GM12878 (cell line): ENCODE measurements at regions of chr14 and their contacts with region 1.

Region 1: GRCh38 chr14:50714450-50715073 is 46.5 kb upstream of the SAV1 start:
- DNase-seq: no peak
- ATAC-seq: peak; percentile 85
- H3K4me3 ChIP-seq: no peak overlapping the region
- H3K27ac ChIP-seq: no peak overlapping the region
- H3K4me1 ChIP-seq: no peaks in the 10 kb centered on the region
- H3K27me3 ChIP-seq: no peaks in the 10 kb centered on the region
- CTCF ChIP-seq: peak; percentile 50 to 54 (median 52); a peak in 5 of 6 replicates
- EP300 ChIP-seq: no peak
- POLR2A ChIP-seq: no peak
- RAD21 ChIP-seq: peak; percentile 64

Region 2: DNA sequence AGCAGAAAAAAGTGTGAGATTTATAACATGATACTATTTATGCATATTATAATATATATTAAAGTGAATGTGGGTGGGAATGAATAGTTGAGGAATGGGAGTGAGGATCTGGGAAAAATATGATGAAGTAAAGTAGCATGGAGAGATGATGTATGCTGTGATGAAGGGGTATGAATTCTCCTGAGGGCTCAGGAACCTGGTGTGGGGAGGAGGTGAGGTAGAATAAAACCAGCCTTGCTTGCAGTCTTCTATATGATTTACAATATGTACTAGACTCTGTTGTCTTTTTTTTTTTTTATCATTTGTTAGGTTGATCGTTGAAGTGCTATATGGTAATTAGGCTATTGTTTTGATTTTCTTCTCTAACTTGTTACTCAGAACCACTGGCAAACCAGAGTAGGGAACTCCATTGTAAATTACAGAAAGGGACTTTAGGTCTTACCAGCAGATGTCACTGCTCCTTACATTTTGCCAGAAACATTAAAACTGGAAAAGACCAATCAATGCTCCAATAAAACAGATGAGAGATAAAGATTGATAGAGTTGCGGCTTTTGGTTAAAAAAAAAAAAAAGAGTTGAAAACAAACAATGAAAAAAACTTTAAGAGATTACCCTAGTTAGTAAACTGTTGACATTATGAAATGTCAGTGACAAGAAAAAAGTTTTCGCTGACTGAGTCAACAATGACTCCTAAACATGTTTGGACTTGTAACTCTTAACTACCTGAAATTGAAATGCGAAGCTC is 114.7 kb before region 1 on chr14:
- CTCF ChIA-PET with region 1: interaction called, 23 read pairs
- POLR2A ChIA-PET with region 1: interaction called, 3 read pairs
- RAD21 ChIA-PET with region 1: interaction called, 17 read pairs
- SMC1A ChIA-PET with region 1: interaction called, 34 read pairs
- in situ Hi-C with region 1: no loop called
- intact Hi-C with region 1: loop called (anchors 1 kb)
- DNase-seq: no peak
- ATAC-seq: peak; percentile 76
- H3K4me3 ChIP-seq: no peak overlapping the region
- H3K27ac ChIP-seq: no peak overlapping the region
- H3K4me1 ChIP-seq: no peaks in the 10 kb centered on the region
- H3K27me3 ChIP-seq: no peaks in the 10 kb centered on the region
- CTCF ChIP-seq: peak; percentile 49 to 67 (median 55); a peak in 5 of 6 replicates
- EP300 ChIP-seq: no peak
- POLR2A ChIP-seq: no peak
- RAD21 ChIP-seq: peak; percentile 79

Region 3: DNA sequence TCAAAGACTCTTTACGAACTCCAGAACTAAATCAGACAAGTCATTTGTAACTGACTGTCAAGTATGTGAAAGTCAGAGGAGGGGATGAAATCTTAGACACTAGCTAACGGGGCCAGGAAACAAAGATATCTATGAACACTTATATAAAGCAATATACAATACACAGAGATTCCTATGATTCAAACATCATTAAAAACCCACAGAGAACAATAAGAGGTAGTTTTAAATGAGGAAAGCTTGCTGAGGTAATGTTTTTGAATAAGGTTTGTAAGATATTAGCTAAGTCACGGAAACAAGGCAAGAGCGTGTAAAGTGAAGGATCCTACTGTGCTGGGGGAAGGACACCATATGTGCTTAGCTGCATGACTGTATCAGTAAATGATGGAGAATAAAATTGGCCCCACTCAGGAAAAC is 83.1 kb before region 1 on chr14:
- CTCF ChIA-PET with region 1: interaction called, 10 read pairs
- POLR2A ChIA-PET with region 1: no interaction called
- RAD21 ChIA-PET with region 1: interaction called, 19 read pairs
- SMC1A ChIA-PET with region 1: interaction called, 6 read pairs
- in situ Hi-C with region 1: no loop called
- intact Hi-C with region 1: no loop called
- DNase-seq: no peak
- ATAC-seq: no peak
- H3K4me3 ChIP-seq: no peak overlapping the region
- H3K27ac ChIP-seq: no peak overlapping the region
- H3K4me1 ChIP-seq: no peaks in the 10 kb centered on the region
- H3K27me3 ChIP-seq: no peaks in the 10 kb centered on the region
- CTCF ChIP-seq: no peak
- EP300 ChIP-seq: no peak
- POLR2A ChIP-seq: no peak
- RAD21 ChIP-seq: no peak

Region 4: DNA sequence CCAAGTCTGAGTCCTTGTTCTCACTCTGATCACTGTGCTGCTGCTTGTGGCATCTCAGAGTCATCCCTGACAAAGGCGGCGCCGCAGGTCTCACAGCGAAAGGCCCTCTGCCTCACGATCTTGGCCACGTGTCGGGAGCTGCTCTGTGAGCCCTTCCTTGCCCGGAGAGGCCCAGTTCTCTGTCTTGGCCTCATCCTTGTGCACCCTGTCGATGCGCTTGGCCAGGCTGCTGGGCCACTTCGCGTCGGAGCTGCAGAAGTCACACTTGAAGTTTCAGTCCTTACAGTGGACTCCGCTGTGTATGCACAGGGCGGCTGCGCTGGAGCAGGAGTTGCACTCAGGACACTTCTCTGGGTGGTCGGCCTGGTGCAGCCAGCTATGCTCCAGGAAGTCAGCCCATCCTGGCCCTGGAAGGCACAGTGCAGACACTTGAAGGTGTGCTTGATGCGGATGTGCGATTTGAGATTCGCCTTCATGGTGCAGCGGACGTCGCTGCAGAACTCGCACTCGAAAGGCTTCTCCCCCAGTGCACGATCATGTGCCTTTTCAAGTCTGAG is 10.0 kb before region 1 on chr14:
- CTCF ChIA-PET with region 1: interaction called, 10 read pairs
- POLR2A ChIA-PET with region 1: no interaction called
- RAD21 ChIA-PET with region 1: no interaction called
- SMC1A ChIA-PET with region 1: interaction called, 5 read pairs
- in situ Hi-C with region 1: no loop called
- intact Hi-C with region 1: no loop called
- DNase-seq: no peak
- ATAC-seq: no peak
- H3K4me3 ChIP-seq: no peak overlapping the region
- H3K27ac ChIP-seq: no peak overlapping the region
- H3K4me1 ChIP-seq: no peaks in the 10 kb centered on the region
- H3K27me3 ChIP-seq: no peaks in the 10 kb centered on the region
- CTCF ChIP-seq: no peak
- EP300 ChIP-seq: no peak
- POLR2A ChIP-seq: no peak
- RAD21 ChIP-seq: no peak

Region 5: DNA sequence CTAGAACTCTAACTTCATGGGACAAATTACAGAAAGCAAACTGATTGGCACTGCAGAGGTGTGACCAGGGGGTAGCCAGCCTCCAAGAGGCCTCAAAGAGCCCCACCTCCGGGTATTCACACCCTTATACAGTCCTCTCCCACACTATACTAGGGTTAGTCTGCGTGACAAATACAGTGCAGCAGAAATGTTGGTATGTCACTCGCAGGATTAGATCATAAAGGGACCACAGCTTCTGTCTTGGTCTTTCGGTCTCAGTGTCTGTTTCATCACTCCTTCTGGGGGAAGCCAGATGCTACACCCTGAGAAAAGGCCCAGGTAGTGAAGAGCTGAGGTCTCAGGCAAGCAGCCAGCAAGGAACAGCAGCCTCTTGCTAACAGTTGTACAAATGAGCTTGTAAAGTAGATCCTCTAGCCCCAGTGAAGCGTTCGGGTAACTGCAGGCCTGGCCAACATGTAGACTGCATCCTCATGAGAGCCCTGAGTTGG is 22.4 kb after region 1 on chr14:
- CTCF ChIA-PET with region 1: interaction called, 13 read pairs
- POLR2A ChIA-PET with region 1: no interaction called
- RAD21 ChIA-PET with region 1: interaction called, 4 read pairs
- SMC1A ChIA-PET with region 1: interaction called, 6 read pairs
- in situ Hi-C with region 1: no loop called
- intact Hi-C with region 1: no loop called
- DNase-seq: peak; percentile 79
- ATAC-seq: peak; percentile 89
- H3K4me3 ChIP-seq: no peak overlapping the region
- H3K27ac ChIP-seq: peak overlapping the region; percentile 62
- H3K4me1 ChIP-seq: peaks cover 35% of the 10 kb centered on the region
- H3K27me3 ChIP-seq: no peaks in the 10 kb centered on the region
- CTCF ChIP-seq: no peak
- EP300 ChIP-seq: peak; percentile 66 to 78; a peak in 3 of 4 replicates
- POLR2A ChIP-seq: peak; percentile 46
- RAD21 ChIP-seq: 0 out of 2 replicates have a peak, but pooled peaks have one; percentile 11

Region 6: GRCh38 chr14:50798048-50798421 is 83.5 kb after region 1 on chr14:
- CTCF ChIA-PET with region 1: no interaction called
- POLR2A ChIA-PET with region 1: no interaction called
- RAD21 ChIA-PET with region 1: no interaction called
- SMC1A ChIA-PET with region 1: no interaction called
- in situ Hi-C with region 1: no loop called
- intact Hi-C with region 1: no loop called
- DNase-seq: peak; percentile 42
- ATAC-seq: peak; percentile 98
- H3K4me3 ChIP-seq: no peak overlapping the region; the same call in 1 of the 2 replicates
- H3K27ac ChIP-seq: peak overlapping the region; percentile 36
- H3K4me1 ChIP-seq: peaks cover 55% of the 10 kb centered on the region
- H3K27me3 ChIP-seq: no peaks in the 10 kb centered on the region
- CTCF ChIP-seq: no peak
- EP300 ChIP-seq: 0 out of 4 replicates have a peak, but pooled peaks have one; percentile 17 to 44
- POLR2A ChIP-seq: 0 out of 2 replicates have a peak, but pooled peaks have one; percentile 28
- RAD21 ChIP-seq: no peak